ENCODE measurements at regions of chr17 and their contacts with region 1.

Region 1: DNA sequence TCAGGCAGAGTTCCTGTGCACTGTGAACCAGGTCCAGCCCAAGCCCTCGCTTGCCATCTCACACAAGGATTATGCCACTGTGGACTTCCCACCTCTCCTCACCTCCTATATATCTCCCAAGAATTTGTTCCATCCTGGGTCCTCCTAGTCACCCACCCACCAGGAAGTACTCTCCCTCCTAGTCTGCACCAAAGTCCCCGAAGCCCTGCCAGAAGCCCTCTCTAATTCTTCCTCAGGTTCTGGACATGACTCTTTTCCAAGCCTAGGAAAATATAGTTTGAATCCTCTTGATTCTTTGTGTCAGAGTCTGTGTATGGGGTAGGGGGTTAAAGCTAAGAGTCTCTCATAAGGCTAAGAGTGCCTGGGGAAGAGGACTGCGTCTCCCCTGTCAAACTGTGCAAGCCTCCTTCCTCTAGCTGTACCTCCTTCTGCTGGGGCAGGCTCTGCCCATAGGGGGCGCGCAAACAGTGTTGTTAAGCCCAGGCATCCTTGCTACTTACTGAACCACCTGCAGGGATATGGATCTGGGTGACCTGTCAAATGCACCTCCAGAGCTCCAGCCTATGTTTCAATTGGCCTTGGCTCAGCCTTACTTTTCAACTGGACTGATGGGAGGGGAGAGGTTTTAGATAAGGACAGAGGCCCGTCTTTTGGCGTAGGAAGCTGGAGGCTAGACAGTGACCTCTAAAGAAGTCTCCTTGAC is 16.6 kb upstream of the DLX4 start:
- DNase-seq: peak; percentile 50 to 97
- H3K4me3 ChIP-seq: no peak overlapping the region
- H3K27ac ChIP-seq: no peak overlapping the region
- H3K4me1 ChIP-seq: no peaks in the 10 kb centered on the region
- H3K27me3 ChIP-seq: peaks cover 0 to 6% (median 2%) of the 10 kb centered on the region in 4 experiments; a peak in 2 of 7 replicates
- CTCF ChIP-seq: peak; percentile 94 to 99 (median 97)
- EP300 ChIP-seq: no peak
- POLR2A ChIP-seq: no peak
- RAD21 ChIP-seq: peak; percentile 81 to 88

Region 2: GRCh38 chr17:49861150-49861892 is 91.0 kb before region 1 on chr17:
- CTCF ChIA-PET with region 1: interaction called, 51 read pairs
- POLR2A ChIA-PET with region 1: interaction called, 3 read pairs
- DNase-seq: peak in 1 of 2 experiments; percentile 77
- H3K4me3 ChIP-seq: 0 out of 8 replicates have a peak overlapping the region, but pooled peaks of 1 of the 4 experiments have one; percentile 10
- H3K27ac ChIP-seq: no peak overlapping the region
- H3K4me1 ChIP-seq: peaks cover 0 to 29% (median 19%) of the 10 kb centered on the region in 4 experiments; a peak in 6 of 7 replicates
- H3K27me3 ChIP-seq: peaks cover 0 to 3% (median under 1%) of the 10 kb centered on the region in 4 experiments; a peak in 3 of 7 replicates
- CTCF ChIP-seq: peak; percentile 75 to 89 (median 81)
- EP300 ChIP-seq: no peak
- POLR2A ChIP-seq: no peak
- RAD21 ChIP-seq: peak; percentile 97

Region 3: DNA sequence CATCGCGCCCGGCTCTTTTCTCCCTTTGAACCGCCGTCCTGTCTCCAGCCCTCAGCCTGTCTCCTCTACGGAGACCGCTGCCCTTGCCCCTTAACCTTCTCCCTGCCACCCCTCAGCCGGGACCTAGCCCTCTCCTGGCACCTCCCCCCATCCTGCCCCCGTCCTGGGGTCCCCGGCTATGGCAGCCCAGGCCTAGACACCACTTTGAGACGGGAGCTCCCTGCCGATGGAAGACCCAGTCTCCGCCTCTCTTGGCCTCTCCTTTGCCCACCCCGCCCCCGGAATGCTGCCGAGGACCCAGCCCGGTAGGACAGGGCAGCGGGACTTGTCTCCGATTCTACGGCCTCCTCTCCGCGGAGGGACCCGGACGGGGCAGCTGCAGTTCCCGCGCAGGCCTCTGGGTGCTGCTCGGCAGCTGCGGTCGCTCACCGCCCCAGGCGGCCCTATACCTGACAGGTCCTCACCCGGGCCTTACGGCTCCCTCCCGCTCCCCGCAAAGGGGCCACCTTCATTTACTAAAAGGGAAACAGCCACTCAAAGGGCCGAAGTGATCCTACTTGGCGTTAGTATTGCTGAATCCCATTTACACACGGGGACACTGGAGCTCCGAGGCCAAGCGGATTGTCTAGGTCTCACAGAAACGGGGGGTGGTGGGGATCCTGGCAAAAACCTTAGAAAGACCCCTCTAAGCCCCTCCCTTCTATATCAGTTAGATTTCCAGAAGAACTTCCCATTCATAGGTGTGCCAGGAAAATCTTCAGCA is 71.9 kb before region 1 on chr17:
- CTCF ChIA-PET with region 1: interaction called, 39 read pairs
- POLR2A ChIA-PET with region 1: no interaction called
- DNase-seq: peak; percentile 85 to 95
- H3K4me3 ChIP-seq: peak overlapping the region; percentile 17 to 61 (median 44); a peak in 6 of 8 replicates
- H3K27ac ChIP-seq: no peak overlapping the region
- H3K4me1 ChIP-seq: peaks cover 3 to 15% (median 9%) of the 10 kb centered on the region in 4 experiments
- H3K27me3 ChIP-seq: peaks cover 0 to 4% (median 1%) of the 10 kb centered on the region in 4 experiments; a peak in 5 of 7 replicates
- CTCF ChIP-seq: peak; percentile 89 to 96 (median 91)
- EP300 ChIP-seq: 0 out of 3 replicates have a peak, but pooled peaks of 1 of the 2 experiments have one; percentile 36
- POLR2A ChIP-seq: no peak
- RAD21 ChIP-seq: peak; percentile 92 to 93

Region 4: DNA sequence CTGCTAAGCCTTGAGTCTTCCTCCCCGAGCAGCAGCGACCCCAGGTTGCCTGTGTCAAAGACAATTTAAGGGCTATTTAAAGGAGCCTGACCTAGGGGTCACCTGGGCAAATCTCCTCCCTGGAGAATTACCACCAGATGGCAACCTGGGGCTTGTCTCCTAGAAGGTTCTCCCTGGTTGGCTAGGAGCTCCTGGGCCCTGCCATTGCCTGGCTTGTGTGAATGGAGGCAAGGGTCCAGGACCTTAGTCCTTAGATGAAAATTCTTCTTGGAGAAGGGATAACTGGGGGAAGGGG is 53.2 kb before region 1 on chr17:
- CTCF ChIA-PET with region 1: interaction called, 23 read pairs
- POLR2A ChIA-PET with region 1: interaction called, 3 read pairs
- DNase-seq: peak in 1 of 2 experiments; percentile 70
- H3K4me3 ChIP-seq: no peak overlapping the region
- H3K27ac ChIP-seq: no peak overlapping the region
- H3K4me1 ChIP-seq: peaks cover 4 to 19% (median 14%) of the 10 kb centered on the region in 4 experiments
- H3K27me3 ChIP-seq: peaks cover 5 to 33% (median 32%) of the 10 kb centered on the region in 4 experiments
- CTCF ChIP-seq: peak; percentile 39 to 80 (median 64)
- EP300 ChIP-seq: no peak
- POLR2A ChIP-seq: no peak
- RAD21 ChIP-seq: peak; percentile 63 to 79

Region 5: DNA sequence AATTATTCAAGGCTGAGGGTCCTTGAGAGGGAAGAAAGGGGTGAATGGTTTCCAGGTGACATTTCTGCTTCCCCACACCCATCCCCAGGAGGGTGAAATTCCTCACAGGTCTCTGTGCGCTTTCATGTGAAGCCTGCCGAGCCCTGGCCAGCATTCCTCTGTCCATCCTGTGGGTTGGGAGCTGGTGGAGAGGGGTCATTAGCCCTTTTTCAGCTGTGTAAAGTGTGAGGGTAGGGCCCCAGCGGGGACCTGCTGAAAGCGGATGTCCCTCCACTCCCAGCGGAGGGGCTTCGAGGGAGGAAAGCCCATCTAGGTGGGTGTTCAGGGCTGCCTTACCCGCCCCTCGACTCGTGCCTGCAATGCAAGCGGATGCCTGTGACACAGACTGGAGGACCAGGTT is 36.7 kb before region 1 on chr17:
- CTCF ChIA-PET with region 1: interaction called, 19 read pairs
- POLR2A ChIA-PET with region 1: interaction called, 4 read pairs
- DNase-seq: peak in 1 of 2 experiments; percentile 56
- H3K4me3 ChIP-seq: 0 out of 8 replicates have a peak overlapping the region, but pooled peaks of 1 of the 4 experiments have one; percentile 10
- H3K27ac ChIP-seq: no peak overlapping the region
- H3K4me1 ChIP-seq: peaks cover 3 to 12% (median 6%) of the 10 kb centered on the region in 4 experiments; a peak in 6 of 7 replicates
- H3K27me3 ChIP-seq: peaks cover 0 to 37% (median 32%) of the 10 kb centered on the region in 4 experiments; a peak in 6 of 7 replicates
- CTCF ChIP-seq: no peak
- EP300 ChIP-seq: no peak
- POLR2A ChIP-seq: no peak
- RAD21 ChIP-seq: no peak

Region 6: GRCh38 chr17:49935526-49936210 is 16.7 kb before region 1 on chr17:
- CTCF ChIA-PET with region 1: interaction called, 87 read pairs
- POLR2A ChIA-PET with region 1: no interaction called
- DNase-seq: no peak
- H3K4me3 ChIP-seq: no peak overlapping the region
- H3K27ac ChIP-seq: no peak overlapping the region
- H3K4me1 ChIP-seq: peaks cover 0 to 10% (median 0%) of the 10 kb centered on the region in 4 experiments; a peak in 5 of 7 replicates
- H3K27me3 ChIP-seq: no peaks in the 10 kb centered on the region
- CTCF ChIP-seq: no peak
- EP300 ChIP-seq: no peak
- POLR2A ChIP-seq: no peak
- RAD21 ChIP-seq: no peak

Region 7: DNA sequence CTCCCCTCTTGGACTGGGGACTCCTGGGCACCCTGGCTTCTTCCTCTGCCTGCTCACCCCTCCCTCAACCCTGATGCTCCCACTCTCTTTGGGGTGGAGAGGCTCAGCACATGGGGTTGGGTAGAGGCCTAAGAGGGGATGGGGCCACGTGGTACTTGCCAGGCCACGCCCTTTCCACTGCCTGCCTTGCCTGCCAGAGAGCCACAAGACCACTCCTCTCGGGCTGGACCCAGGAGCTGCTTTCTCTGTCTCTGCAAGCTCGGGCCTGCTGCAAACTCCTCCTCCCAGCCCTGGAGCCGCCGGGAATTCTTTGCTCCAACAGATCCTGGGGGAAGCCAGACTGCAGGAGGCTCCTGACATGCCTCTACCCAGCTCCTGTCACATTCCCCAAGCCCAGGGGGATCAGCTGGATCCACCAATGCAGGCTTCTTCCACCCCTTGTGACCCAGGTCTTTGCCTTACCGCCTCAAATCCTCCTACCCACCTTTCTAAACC is 28.4 kb after region 1 on chr17:
- CTCF ChIA-PET with region 1: interaction called, 73 read pairs
- POLR2A ChIA-PET with region 1: no interaction called
- DNase-seq: peak; percentile 64 to 72
- H3K4me3 ChIP-seq: no peak overlapping the region
- H3K27ac ChIP-seq: no peak overlapping the region
- H3K4me1 ChIP-seq: peaks cover 3 to 25% (median 14%) of the 10 kb centered on the region in 4 experiments
- H3K27me3 ChIP-seq: peaks cover 1 to 37% (median 18%) of the 10 kb centered on the region in 4 experiments
- CTCF ChIP-seq: no peak
- EP300 ChIP-seq: no peak
- POLR2A ChIP-seq: no peak
- RAD21 ChIP-seq: 0 out of 4 replicates have a peak, but pooled peaks of 1 of the 2 experiments have one; percentile 13

Measured in H1 (cell line).